ENCODE measurements at regions of chr10 and their contacts with region 1.

Region 1: DNA sequence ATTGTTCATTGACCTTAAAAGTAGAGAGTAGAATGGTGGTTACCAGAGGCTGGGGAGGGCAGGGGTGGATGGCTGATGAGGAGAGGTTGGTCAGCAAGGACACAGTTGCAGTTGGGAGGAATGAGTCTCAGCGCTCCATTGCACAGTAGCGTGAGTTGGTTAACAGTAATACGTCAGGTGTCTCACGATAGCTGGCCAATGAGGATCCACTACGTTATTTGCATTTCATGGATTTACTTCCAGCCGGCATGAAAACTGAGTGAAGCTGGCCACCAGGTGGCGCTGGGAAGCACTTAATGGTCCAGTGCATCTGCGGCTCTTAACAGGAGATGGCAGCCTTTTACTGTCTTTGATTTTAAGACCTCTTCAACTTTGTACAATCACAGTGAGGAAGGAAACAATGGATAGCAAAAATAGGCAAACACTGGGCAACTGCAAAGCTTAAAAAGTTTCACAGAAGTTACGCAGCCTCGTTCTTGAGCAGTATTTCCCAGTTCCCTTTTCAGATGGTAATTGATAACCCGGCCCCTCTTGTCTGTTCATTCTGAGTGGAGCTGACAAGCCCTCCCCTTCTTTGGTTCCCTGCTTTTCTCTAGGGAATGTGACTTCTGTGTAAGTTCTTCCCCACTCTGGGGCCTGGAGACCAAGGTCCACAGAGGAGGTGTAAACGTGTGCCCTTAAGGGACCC is 23.7 kb downstream of the AKR1E2 start:
- DNase-seq: peak; percentile 94
- ATAC-seq: peak; percentile 97
- H3K4me3 Mint-ChIP-seq: no peak overlapping the region
- H3K27ac Mint-ChIP-seq: no peak overlapping the region
- H3K4me1 Mint-ChIP-seq: peaks cover 3% of the 10 kb centered on the region
- H3K27me3 Mint-ChIP-seq: no peaks in the 10 kb centered on the region
- CTCF ChIP-seq: peak; percentile 96

Region 2: GRCh38 chr10:4425072-4425471 is 424.6 kb before region 1 on chr10:
- CTCF ChIA-PET with region 1: no interaction called
- POLR2A ChIA-PET with region 1: no interaction called
- intact Hi-C with region 1: no loop called
- DNase-seq: no peak
- ATAC-seq: no peak
- H3K4me3 Mint-ChIP-seq: no peak overlapping the region
- H3K27ac Mint-ChIP-seq: no peak overlapping the region
- H3K4me1 Mint-ChIP-seq: no peaks in the 10 kb centered on the region
- H3K27me3 Mint-ChIP-seq: peaks cover 3% of the 10 kb centered on the region
- CTCF ChIP-seq: no peak

Region 3: GRCh38 chr10:4820804-4821401 is 28.8 kb before region 1 on chr10:
- CTCF ChIA-PET with region 1: interaction called, 47 read pairs
- POLR2A ChIA-PET with region 1: no interaction called
- intact Hi-C with region 1: no loop called
- DNase-seq: no peak
- ATAC-seq: no peak
- H3K4me3 Mint-ChIP-seq: no peak overlapping the region
- H3K27ac Mint-ChIP-seq: no peak overlapping the region
- H3K4me1 Mint-ChIP-seq: peaks cover 2% of the 10 kb centered on the region
- H3K27me3 Mint-ChIP-seq: peaks cover 23% of the 10 kb centered on the region
- CTCF ChIP-seq: no peak

Region 4: GRCh38 chr10:4867520-4868356 is 18.0 kb after region 1 on chr10:
- CTCF ChIA-PET with region 1: interaction called, 12 read pairs
- POLR2A ChIA-PET with region 1: no interaction called
- intact Hi-C with region 1: no loop called
- DNase-seq: no peak
- ATAC-seq: no peak
- H3K4me3 Mint-ChIP-seq: no peak overlapping the region
- H3K27ac Mint-ChIP-seq: no peak overlapping the region
- H3K4me1 Mint-ChIP-seq: peaks cover 3% of the 10 kb centered on the region
- H3K27me3 Mint-ChIP-seq: peaks cover 2% of the 10 kb centered on the region
- CTCF ChIP-seq: no peak

Region 5: GRCh38 chr10:5283305-5284158 is 433.8 kb after region 1 on chr10:
- CTCF ChIA-PET with region 1: interaction called, 50 read pairs
- POLR2A ChIA-PET with region 1: no interaction called
- intact Hi-C with region 1: no loop called
- DNase-seq: peak; percentile 71
- ATAC-seq: peak; percentile 86
- H3K4me3 Mint-ChIP-seq: no peak overlapping the region
- H3K27ac Mint-ChIP-seq: peak overlapping the region; percentile 7
- H3K4me1 Mint-ChIP-seq: peaks cover 19% of the 10 kb centered on the region
- H3K27me3 Mint-ChIP-seq: no peaks in the 10 kb centered on the region
- CTCF ChIP-seq: peak; percentile 85

Region 6: DNA sequence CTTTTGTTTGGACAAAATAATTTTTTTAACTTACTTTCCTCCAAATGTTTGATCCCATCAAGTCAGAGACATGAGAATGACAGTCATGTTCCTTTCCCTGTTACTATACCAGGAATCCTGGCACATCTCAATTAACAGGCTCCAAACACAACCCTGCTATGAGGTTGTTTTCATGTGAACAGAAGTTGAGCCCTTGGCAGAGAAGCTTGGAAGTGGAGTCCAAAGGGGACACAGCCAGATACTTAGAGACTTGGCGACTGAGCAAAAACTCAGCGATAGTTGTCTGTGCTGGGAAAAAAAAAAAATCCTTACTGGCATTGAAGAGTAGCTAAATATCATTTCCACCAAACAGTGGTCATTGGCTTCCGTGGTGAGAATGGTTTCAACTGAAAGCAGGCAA is 542.1 kb after region 1 on chr10:
- CTCF ChIA-PET with region 1: interaction called, 10 read pairs
- POLR2A ChIA-PET with region 1: no interaction called
- intact Hi-C with region 1: no loop called
- DNase-seq: no peak
- ATAC-seq: no peak
- H3K4me3 Mint-ChIP-seq: no peak overlapping the region
- H3K27ac Mint-ChIP-seq: no peak overlapping the region
- H3K4me1 Mint-ChIP-seq: no peaks in the 10 kb centered on the region
- H3K27me3 Mint-ChIP-seq: no peaks in the 10 kb centered on the region
- CTCF ChIP-seq: no peak

Region 7: DNA sequence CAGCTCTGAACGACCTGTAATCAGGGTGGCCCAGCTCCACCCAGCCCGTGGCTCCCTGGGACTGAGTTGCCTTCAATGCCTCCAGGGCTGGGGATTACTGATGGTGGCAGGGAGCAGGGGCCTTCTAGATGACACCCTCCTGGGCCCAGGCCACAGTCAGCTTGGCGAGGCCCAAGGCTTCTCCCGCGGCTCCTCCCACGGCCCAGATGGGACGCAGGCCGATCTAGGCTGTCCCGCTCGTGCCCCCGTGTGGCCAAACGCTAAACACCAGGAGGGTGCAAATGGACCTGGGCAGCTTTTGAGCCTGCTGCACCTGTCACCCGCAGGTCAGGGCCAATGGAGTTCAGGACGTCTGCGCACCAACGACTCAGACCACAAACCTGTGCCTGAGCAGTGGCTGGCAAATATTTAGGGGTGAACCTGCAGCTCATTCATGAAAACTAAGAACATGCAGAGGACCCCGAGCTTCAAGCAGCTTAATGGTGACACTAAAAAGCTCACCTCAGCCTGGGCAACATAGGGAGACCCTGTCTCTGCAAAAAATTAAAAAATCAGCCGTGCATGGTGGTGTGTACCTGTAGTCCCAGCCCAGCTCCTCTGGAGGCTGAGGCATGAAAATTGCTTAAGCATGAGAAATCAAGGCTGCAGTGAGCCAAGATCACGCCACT is 773.5 kb after region 1 on chr10:
- CTCF ChIA-PET with region 1: interaction called, 20 read pairs
- POLR2A ChIA-PET with region 1: no interaction called
- intact Hi-C with region 1: no loop called
- DNase-seq: peak; percentile 91
- ATAC-seq: peak; percentile 99
- H3K4me3 Mint-ChIP-seq: no peak overlapping the region
- H3K27ac Mint-ChIP-seq: no peak overlapping the region
- H3K4me1 Mint-ChIP-seq: no peaks in the 10 kb centered on the region
- H3K27me3 Mint-ChIP-seq: peaks cover 2% of the 10 kb centered on the region
- CTCF ChIP-seq: peak; percentile 84

Measured in activated CD8-positive, alpha-beta T cell treated with anti-CD3 and anti-CD28 coated beads for 36 hours (primary cell).